ENCODE measurements at regions of chr4 and their contacts with region 1.

Region 1: GRCh38 chr4:7802093-7802726 is 137.5 kb downstream of the AFAP1 start:
- DNase-seq: peak; percentile 45 to 85 (median 67)
- ATAC-seq: peak; percentile 83 to 94 (median 88)
- H3K4me3 ChIP-seq: no peak overlapping the region
- H3K4me3 Mint-ChIP-seq: no peak overlapping the region
- H3K27ac ChIP-seq: no peak overlapping the region
- H3K27ac Mint-ChIP-seq: no peak overlapping the region
- H3K4me1 ChIP-seq: peaks cover 0 to 5% of the 10 kb centered on the region in 2 experiments
- H3K4me1 Mint-ChIP-seq: peaks cover 7 to 14% (median 12%) of the 10 kb centered on the region in 3 donors
- H3K27me3 ChIP-seq: no peaks in the 10 kb centered on the region
- H3K27me3 Mint-ChIP-seq: no peaks in the 10 kb centered on the region

Region 2: DNA sequence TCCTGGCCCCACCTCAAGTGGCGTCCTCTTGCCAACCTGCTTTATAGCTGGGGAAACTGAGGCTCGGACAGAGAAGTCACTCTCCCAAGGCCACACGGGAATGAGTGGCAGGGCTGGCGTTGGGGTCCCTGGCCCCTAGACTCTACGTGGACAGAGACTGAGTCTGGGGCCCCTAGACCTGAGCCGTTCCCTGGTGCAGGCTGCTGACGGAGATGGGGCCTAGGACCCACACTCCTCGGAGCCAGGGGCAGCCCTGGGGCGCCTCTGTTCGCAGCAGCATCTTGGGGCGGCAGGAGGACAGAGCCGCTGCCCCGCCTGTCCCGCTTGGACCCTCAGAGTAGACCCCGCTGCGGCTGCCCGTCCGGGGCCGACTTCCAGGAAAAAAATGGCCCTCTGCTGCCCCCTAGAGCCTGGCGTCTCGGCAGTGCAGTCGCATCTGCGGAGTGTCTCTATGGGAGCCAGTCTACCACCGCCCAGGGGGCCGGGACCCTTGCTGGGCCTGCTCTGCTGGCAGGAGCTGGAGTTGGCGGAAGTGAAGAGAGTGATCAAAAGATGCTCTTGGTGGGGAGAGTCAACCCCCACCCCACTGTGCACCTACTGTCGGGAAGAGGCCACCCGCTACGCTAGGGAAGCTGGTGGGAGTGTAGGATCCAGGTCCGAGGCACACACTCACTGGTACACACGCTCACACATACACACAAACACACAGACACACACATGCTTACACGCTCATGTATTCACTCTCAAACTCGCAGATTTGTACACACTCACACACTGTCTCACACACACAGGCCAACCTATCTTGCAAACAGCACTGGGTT is 82.6 kb before region 1 on chr4:
- CTCF ChIA-PET with region 1: interaction called in 1 of 2 experiments, 10 read pairs
- POLR2A ChIA-PET with region 1: no interaction called
- DNase-seq: peak in 31 of 35 experiments; percentile 9 to 66 (median 50)
- ATAC-seq: peak in 3 of 4 experiments; percentile 53 to 62 (median 60)
- H3K4me3 ChIP-seq: no peak overlapping the region
- H3K4me3 Mint-ChIP-seq: no peak overlapping the region
- H3K27ac ChIP-seq: no peak overlapping the region
- H3K27ac Mint-ChIP-seq: peak overlapping the region in 1 of 2 donors; percentile 5
- H3K4me1 ChIP-seq: peaks cover 0 to 8% of the 10 kb centered on the region in 2 experiments
- H3K4me1 Mint-ChIP-seq: peaks cover 3 to 5% (median 4%) of the 10 kb centered on the region in 3 donors
- H3K27me3 ChIP-seq: peaks cover 0 to 38% of the 10 kb centered on the region in 2 experiments
- H3K27me3 Mint-ChIP-seq: peaks cover 12 to 19% of the 10 kb centered on the region in 2 donors

Region 3: DNA sequence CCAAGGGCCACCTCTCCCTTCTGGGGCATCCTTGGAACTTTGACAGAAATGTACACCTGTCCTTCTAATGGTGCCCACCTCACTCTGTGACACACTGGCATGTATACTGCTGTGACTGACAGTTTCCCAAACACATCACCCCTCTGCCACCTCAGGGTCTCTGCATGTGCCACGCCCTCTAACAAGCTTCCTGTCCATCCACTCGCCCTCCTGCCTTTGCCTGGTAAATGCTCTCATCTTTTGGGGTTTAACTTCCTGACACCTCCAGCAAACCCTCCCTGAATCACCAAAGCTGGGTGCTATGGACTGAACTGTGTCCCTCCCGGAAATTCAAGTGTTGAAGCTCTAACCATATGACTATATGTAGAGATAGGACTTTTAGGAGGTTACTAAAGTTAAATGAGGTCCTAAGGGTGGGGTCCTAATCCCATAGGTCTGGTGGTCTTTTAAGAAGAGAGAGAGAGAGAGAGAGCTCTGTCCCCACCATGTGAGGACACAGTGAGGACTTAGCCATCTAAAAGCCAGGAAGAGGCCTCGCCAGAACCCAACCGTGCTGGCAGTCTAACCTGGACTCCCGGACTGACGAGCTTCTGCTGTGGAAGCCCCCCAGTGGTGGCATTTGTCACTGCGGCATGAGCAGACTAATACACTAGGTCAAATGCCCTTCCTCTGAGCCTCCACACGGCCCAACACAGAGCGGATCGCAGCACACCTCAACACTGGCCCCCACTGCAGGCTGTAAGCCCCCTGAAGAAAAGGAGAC is 41.8 kb after region 1 on chr4:
- CTCF ChIA-PET with region 1: interaction called in 1 of 2 experiments, 11 read pairs
- POLR2A ChIA-PET with region 1: no interaction called
- DNase-seq: peak in 33 of 35 experiments; percentile 19 to 81 (median 50)
- ATAC-seq: peak; percentile 68 to 91 (median 84)
- H3K4me3 ChIP-seq: no peak overlapping the region
- H3K4me3 Mint-ChIP-seq: peak overlapping the region in 1 of 3 donors; percentile 15
- H3K27ac ChIP-seq: no peak overlapping the region
- H3K27ac Mint-ChIP-seq: peak overlapping the region; percentile 53 to 69
- H3K4me1 ChIP-seq: peaks cover 0 to 19% of the 10 kb centered on the region in 2 experiments
- H3K4me1 Mint-ChIP-seq: peaks cover 13 to 41% (median 24%) of the 10 kb centered on the region in 3 donors
- H3K27me3 ChIP-seq: no peaks in the 10 kb centered on the region
- H3K27me3 Mint-ChIP-seq: peaks cover 0 to 5% of the 10 kb centered on the region in 2 donors

Region 4: GRCh38 chr4:7938266-7938608 is 136.0 kb after region 1 on chr4:
- CTCF ChIA-PET with region 1: interaction called, 7 to 10 read pairs
- POLR2A ChIA-PET with region 1: interaction called in 1 of 2 experiments, 3 read pairs
- DNase-seq: peak in 1 of 35 experiments; percentile 13
- ATAC-seq: no peak
- H3K4me3 ChIP-seq: peak overlapping the region; percentile 69 to 71
- H3K4me3 Mint-ChIP-seq: peak overlapping the region; percentile 73 to 83 (median 79)
- H3K27ac ChIP-seq: no peak overlapping the region
- H3K27ac Mint-ChIP-seq: peak overlapping the region in 1 of 2 donors; percentile 59
- H3K4me1 ChIP-seq: peaks cover 6 to 21% of the 10 kb centered on the region in 2 experiments
- H3K4me1 Mint-ChIP-seq: peaks cover 14 to 38% (median 19%) of the 10 kb centered on the region in 3 donors
- H3K27me3 ChIP-seq: peaks cover 8 to 14% of the 10 kb centered on the region in 2 experiments
- H3K27me3 Mint-ChIP-seq: peaks cover 12% of the 10 kb centered on the region in 2 donors

Measured in T-cell (primary cell).